Esophagus muscularis mucosa (tissue), 4 donors: ENCODE measurements at regions of chr12 and their contacts with region 1.

Region 1: GRCh38 chr12:109713187-109713984 is at the start of gene FAM222A:
- DNase-seq: peak; percentile 98
- H3K4me3 ChIP-seq: peak within 1 kb of the TSS; percentile 59 to 84 (median 74)
- H3K27ac ChIP-seq: peak within 1 kb of the TSS; percentile 54 to 82 (median 75)
- H3K4me1 ChIP-seq: peaks cover 34 to 58% (median 50%) of the 10 kb centered on the region in 4 donors
- H3K27me3 ChIP-seq: peaks cover 3 to 67% (median 13%) of the 10 kb centered on the region in 4 donors
- CTCF ChIP-seq: peak; percentile 29 to 42 (median 29)
- EP300 ChIP-seq: no peak
- POLR2A ChIP-seq: no peak
- total RNA-seq, gene FAM222A: 0.42 to 3.8 (median 3.2) TPM

Region 2: GRCh38 chr12:109597795-109598427 is 115.5 kb before region 1 on chr12:
- intact Hi-C with region 1: loop called (anchors 5 kb)
- DNase-seq: peak; percentile 96
- H3K4me3 ChIP-seq: no peak overlapping the region
- H3K27ac ChIP-seq: no peak overlapping the region
- H3K4me1 ChIP-seq: peaks cover 8 to 13% (median 10%) of the 10 kb centered on the region in 4 donors
- H3K27me3 ChIP-seq: peaks cover 0 to 4% (median 0%) of the 10 kb centered on the region in 4 donors
- CTCF ChIP-seq: peak; percentile 95 to 99 (median 97)
- EP300 ChIP-seq: no peak
- POLR2A ChIP-seq: no peak